H1 (cell line): ENCODE measurements at regions of chr1 and their contacts with region 1.

Region 1: DNA sequence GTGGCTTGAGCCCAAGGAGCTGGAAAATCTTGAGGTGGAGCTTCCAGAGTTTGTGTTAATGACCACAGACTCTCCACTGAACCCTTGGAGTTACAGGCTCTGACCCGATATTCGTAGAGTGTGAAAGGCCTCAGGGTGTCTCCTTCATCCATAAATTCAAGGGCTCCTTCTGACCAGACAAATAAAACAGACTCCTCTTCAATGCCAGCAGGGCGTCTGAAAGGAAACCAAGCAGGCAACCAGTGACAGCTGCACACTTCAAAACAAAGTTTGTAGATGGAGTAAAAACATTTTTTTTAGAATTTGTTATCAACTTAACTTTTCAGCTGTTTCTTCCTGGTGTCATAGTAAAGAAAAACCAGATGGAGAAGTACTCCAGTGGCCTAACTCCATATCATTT is 161.1 kb downstream of the KCTD3 start:
- DNase-seq: no peak
- H3K4me3 ChIP-seq: no peak overlapping the region
- H3K27ac ChIP-seq: no peak overlapping the region
- H3K4me1 ChIP-seq: no peaks in the 10 kb centered on the region
- H3K27me3 ChIP-seq: no peaks in the 10 kb centered on the region
- CTCF ChIP-seq: no peak
- EP300 ChIP-seq: no peak
- POLR2A ChIP-seq: no peak
- RAD21 ChIP-seq: no peak

Region 2: GRCh38 chr1:215710036-215710898 is 17.9 kb before region 1 on chr1:
- CTCF ChIA-PET with region 1: interaction called, 10 read pairs
- POLR2A ChIA-PET with region 1: no interaction called
- DNase-seq: peak; percentile 13 to 51
- H3K4me3 ChIP-seq: no peak overlapping the region
- H3K27ac ChIP-seq: no peak overlapping the region
- H3K4me1 ChIP-seq: no peaks in the 10 kb centered on the region
- H3K27me3 ChIP-seq: no peaks in the 10 kb centered on the region
- CTCF ChIP-seq: peak in 2 of 3 experiments; percentile 69 to 87; a peak in 3 of 4 replicates
- EP300 ChIP-seq: no peak
- POLR2A ChIP-seq: no peak
- RAD21 ChIP-seq: peak; percentile 74 to 82

Region 3: GRCh38 chr1:215824245-215824644 is 96.1 kb after region 1 on chr1:
- CTCF ChIA-PET with region 1: no interaction called
- POLR2A ChIA-PET with region 1: no interaction called
- DNase-seq: peak; percentile 9 to 46
- H3K4me3 ChIP-seq: no peak overlapping the region
- H3K27ac ChIP-seq: no peak overlapping the region
- H3K4me1 ChIP-seq: no peaks in the 10 kb centered on the region
- H3K27me3 ChIP-seq: no peaks in the 10 kb centered on the region
- CTCF ChIP-seq: peak in 2 of 3 experiments; percentile 61 to 62; a peak in 3 of 4 replicates
- EP300 ChIP-seq: no peak
- POLR2A ChIP-seq: no peak
- RAD21 ChIP-seq: peak; percentile 88 to 94